ENCODE measurements at regions of chr4 and their contacts with region 1.

Region 1: GRCh38 chr4:158624889-158625478 is 46.7 kb downstream of the C4orf46 start:
- DNase-seq: peak; percentile 24
- H3K4me3 Mint-ChIP-seq: no peak overlapping the region
- H3K27ac Mint-ChIP-seq: no peak overlapping the region
- H3K4me1 Mint-ChIP-seq: no peaks in the 10 kb centered on the region
- H3K27me3 Mint-ChIP-seq: no peaks in the 10 kb centered on the region
- CTCF ChIP-seq: peak; percentile 34

Region 2: DNA sequence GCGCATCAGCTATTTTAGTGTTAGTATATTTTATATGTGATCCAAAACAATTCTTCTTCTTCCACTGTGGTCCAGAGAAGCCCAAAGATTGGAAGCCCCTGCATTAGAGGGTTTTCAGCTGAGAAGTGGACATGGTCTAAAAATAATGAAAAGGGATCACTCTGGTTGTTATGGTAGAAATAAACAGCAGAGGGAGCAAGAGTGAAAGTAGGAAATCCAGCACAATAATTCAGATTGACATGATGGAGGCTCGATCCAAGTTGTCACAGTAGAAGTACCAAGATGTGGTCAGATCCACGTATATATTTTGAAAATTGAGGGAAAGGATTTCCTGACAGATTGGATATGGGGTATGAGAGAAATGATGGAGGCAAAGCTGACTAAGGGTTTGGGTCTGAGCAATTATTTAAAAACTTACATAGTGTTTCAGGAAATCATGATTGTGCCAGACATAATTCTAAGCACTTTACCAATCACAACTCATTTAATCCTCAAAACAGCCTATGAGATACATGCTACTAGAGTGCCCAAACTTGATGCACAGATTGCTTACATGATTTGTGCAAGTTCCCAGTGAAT is 431.7 kb before region 1 on chr4:
- CTCF ChIA-PET with region 1: no interaction called
- intact Hi-C with region 1: loop called (anchors 5 kb)
- DNase-seq: no peak
- H3K4me3 Mint-ChIP-seq: no peak overlapping the region
- H3K27ac Mint-ChIP-seq: no peak overlapping the region
- H3K4me1 Mint-ChIP-seq: no peaks in the 10 kb centered on the region
- H3K27me3 Mint-ChIP-seq: no peaks in the 10 kb centered on the region
- CTCF ChIP-seq: no peak

Region 3: GRCh38 chr4:158410272-158410671 is 214.7 kb before region 1 on chr4:
- CTCF ChIA-PET with region 1: no interaction called
- intact Hi-C with region 1: loop called (anchors 1 kb)
- DNase-seq: no peak
- H3K4me3 Mint-ChIP-seq: no peak overlapping the region
- H3K27ac Mint-ChIP-seq: no peak overlapping the region
- H3K4me1 Mint-ChIP-seq: no peaks in the 10 kb centered on the region
- H3K27me3 Mint-ChIP-seq: peaks cover 11% of the 10 kb centered on the region
- CTCF ChIP-seq: no peak

Measured in Calu3 (cell line).